ENCODE measurements at regions of chr1 and their contacts with region 1.

Region 1: DNA sequence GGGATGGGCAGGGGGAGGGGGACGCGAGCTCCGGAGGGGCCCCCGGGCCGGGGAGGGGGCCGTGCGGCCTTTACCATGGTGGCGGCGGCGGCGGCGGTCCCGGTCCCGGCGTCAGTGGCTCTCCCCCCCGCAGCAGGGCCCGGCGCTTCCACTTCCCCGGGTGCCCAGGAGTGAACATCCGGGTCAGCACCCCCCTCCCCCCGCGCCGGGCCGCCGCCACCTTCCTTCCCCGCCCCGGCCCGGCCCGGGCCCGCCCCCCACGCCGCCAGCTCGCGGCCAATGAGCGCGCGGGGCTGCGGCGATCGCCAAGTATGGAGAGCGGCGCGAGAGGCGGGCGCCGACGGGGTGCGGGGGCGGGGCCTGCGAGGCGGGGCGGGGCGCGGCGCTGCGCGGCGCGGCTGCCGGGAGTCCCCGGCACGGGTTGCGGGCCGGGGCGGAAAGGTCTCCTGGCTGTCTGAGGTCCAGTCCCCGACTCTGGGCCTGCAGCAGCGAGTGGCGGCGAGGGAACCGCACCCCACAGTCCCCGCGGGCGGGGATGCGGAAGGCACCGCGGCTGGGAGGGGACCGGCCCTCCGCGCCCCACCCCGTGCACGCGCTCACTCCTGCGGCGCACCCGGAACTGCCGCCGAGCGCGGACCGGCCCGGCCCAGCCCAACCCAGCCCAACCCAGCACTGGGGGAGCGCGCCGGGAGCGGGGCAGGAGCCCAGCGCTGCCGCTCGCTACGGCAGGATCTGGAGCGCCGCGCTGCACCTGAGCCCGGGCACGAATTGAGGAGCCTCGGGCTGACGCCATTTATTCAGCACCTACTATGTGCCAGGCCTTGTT is at the start of gene CAPZB:
- DNase-seq: peak; percentile 97 to 99
- ATAC-seq: peak; percentile 92
- H3K4me3 ChIP-seq: peak within 1 kb of the TSS; percentile 84 to 97
- H3K27ac ChIP-seq: peak within 1 kb of the TSS; percentile 72 to 85
- H3K4me1 ChIP-seq: peaks cover 0 to 7% of the 10 kb centered on the region in 2 donors
- H3K27me3 ChIP-seq: no peaks in the 10 kb centered on the region
- total RNA-seq, gene CAPZB: 289 to 297 TPM

Region 2: DNA sequence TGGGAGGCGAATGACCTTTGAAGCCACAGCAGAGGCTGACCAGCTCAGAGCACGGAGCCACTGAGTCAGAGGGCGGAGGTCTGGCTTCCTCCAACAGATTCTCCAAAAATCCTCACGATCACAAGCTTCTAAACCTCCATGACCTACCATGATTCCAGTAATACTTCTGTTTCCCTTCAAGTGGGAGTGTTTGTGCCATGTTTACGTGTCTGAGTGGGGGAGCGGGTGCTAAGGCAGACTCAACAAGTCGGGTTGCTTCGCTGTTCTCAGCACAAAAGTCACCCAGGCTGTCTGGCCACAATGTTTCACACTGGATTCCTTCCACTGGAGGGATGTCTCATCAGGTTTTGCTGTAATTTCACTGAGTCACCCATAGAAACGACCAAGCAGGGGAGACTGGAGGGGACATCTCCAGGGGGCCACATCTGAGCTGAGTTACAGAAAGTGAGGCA is 87.2 kb before region 1 on chr1:
- intact Hi-C with region 1: loop called in 1 of 2 experiments (anchors 5 kb)
- DNase-seq: peak in 1 of 2 donors; percentile 81
- ATAC-seq: peak; percentile 33
- H3K4me3 ChIP-seq: no peak overlapping the region
- H3K27ac ChIP-seq: peak overlapping the region; percentile 8 to 98
- H3K4me1 ChIP-seq: peaks cover 0 to 4% of the 10 kb centered on the region in 2 donors
- H3K27me3 ChIP-seq: no peaks in the 10 kb centered on the region

Region 3: GRCh38 chr1:19448491-19449439 is 36.8 kb before region 1 on chr1:
- intact Hi-C with region 1: loop called (anchors 5 kb)
- DNase-seq: peak in 1 of 2 donors; percentile 88
- ATAC-seq: peak; percentile 47
- H3K4me3 ChIP-seq: no peak overlapping the region
- H3K27ac ChIP-seq: peak overlapping the region; percentile 62 to 91
- H3K4me1 ChIP-seq: peaks cover 3 to 12% of the 10 kb centered on the region in 2 donors
- H3K27me3 ChIP-seq: no peaks in the 10 kb centered on the region

Region 4: GRCh38 chr1:19596714-19597495 is 111.3 kb after region 1 on chr1:
- intact Hi-C with region 1: loop called in 1 of 2 experiments (anchors 10 kb)
- DNase-seq: peak; percentile 98
- ATAC-seq: peak; percentile 98
- H3K4me3 ChIP-seq: peak overlapping the region; percentile 64 to 80
- H3K27ac ChIP-seq: peak overlapping the region; percentile 49 to 79
- H3K4me1 ChIP-seq: peaks cover 0 to 13% of the 10 kb centered on the region in 2 donors
- H3K27me3 ChIP-seq: no peaks in the 10 kb centered on the region

Region 5: GRCh38 chr1:19656780-19657466 is 171.3 kb after region 1 on chr1:
- intact Hi-C with region 1: no loop called
- DNase-seq: no peak
- ATAC-seq: no peak
- H3K4me3 ChIP-seq: no peak overlapping the region
- H3K27ac ChIP-seq: no peak overlapping the region
- H3K4me1 ChIP-seq: no peaks in the 10 kb centered on the region
- H3K27me3 ChIP-seq: no peaks in the 10 kb centered on the region

Region 6: GRCh38 chr1:19728413-19729145 is 243.0 kb after region 1 on chr1:
- intact Hi-C with region 1: no loop called
- DNase-seq: no peak
- ATAC-seq: peak; percentile 57
- H3K4me3 ChIP-seq: no peak overlapping the region
- H3K27ac ChIP-seq: peak overlapping the region in 1 of 2 donors; percentile 86
- H3K4me1 ChIP-seq: no peaks in the 10 kb centered on the region
- H3K27me3 ChIP-seq: no peaks in the 10 kb centered on the region